Activated T-helper 1 cell treated with anti-CD3 and anti-CD28 coated beads, Interleukin-12 subunit alpha, Interleukin-12 subunit beta, Interleukin-2, Interleukin-4 antibody, amounts not matched to agents 30 ng/mL and 10 ng/mL and 1 ng/mL, durations not matched to agents 14 hours and 24 hours and 36 hours (primary cell): ENCODE measurements at regions of chr10 and their contacts with region 1.

Region 1: GRCh38 chr10:90871766-90872647 is at the start of gene RPP30:
- DNase-seq: peak; percentile 82
- H3K4me3 Mint-ChIP-seq: peak within 1 kb of the TSS; percentile 97
- H3K27ac Mint-ChIP-seq: peak within 1 kb of the TSS; percentile 91
- H3K4me1 Mint-ChIP-seq: peaks cover 39% of the 10 kb centered on the region
- H3K27me3 Mint-ChIP-seq: peaks cover 29% of the 10 kb centered on the region
- total RNA-seq, gene RPP30: 78.3 and 80.4 TPM in 2 replicates

Region 2: DNA sequence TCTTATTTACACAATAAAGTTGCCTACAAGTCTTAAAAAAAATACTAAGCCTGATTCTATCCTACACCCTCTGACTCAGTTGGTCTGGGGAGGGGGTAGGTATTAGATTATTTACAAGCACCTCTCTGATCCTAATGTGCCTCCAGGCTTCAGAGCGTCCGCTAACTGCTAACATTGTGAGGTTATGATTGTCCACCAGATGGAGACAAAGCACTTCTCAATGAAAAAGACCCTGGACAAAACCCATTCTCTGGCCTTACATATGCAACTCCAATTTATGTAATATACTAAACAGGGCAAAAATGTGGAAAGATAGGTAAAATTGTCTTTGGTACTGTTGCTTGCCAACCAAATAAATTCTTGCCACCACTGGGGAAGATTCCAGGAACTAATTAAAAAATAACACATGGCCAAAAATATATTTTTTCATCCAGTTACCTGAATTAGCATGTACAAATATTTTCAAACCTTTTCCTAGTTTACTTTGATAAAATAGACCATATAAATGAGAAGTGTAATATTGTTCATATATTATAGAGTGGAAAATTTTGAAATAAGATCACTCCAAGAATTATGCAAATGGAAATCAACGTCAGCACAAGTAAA is 1078.3 kb before region 1 on chr10:
- intact Hi-C with region 1: loop called (anchors 2 kb)
- DNase-seq: no peak
- H3K4me3 Mint-ChIP-seq: no peak overlapping the region
- H3K27ac Mint-ChIP-seq: no peak overlapping the region
- H3K4me1 Mint-ChIP-seq: peaks cover 7% of the 10 kb centered on the region
- H3K27me3 Mint-ChIP-seq: peaks cover 4% of the 10 kb centered on the region

Region 3: GRCh38 chr10:90751107-90751997 is 120.7 kb before region 1 on chr10:
- intact Hi-C with region 1: loop called (anchors 1 kb)
- DNase-seq: peak; percentile 13
- H3K4me3 Mint-ChIP-seq: no peak overlapping the region
- H3K27ac Mint-ChIP-seq: no peak overlapping the region
- H3K4me1 Mint-ChIP-seq: no peaks in the 10 kb centered on the region
- H3K27me3 Mint-ChIP-seq: peaks cover 14% of the 10 kb centered on the region

Region 4: DNA sequence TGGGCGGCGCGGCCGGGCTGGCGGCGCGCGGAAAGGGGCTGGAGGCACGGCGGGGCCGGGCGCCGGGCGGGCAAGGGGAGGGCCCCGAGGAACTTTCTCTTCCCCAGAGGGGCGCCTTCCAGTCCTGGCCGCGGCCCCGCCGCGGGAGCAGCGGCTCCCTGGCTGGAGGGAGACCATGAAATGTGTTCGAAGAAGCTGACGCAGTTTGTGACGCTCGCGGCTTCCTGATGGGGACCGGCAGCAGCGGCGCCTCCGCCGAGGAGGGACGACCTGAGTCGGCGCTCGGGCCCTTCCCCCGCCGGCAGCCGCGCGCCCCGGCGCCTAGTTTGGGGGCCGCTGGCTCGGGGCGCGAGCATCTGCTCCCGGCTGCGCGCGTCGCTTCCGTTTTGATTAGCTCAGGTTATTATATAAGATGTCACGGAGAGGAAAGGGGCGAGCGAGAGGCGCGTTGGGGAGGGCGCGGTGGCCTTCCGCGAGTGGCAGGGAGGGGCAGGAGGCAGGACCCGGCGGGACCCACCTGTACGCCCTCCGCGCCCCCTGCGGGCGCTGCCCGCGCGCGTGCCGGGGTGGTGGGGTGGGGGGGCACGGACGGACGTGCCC is 291.4 kb after region 1 on chr10:
- intact Hi-C with region 1: loop called (anchors 5 kb)
- DNase-seq: peak; percentile 66
- H3K4me3 Mint-ChIP-seq: peak overlapping the region; percentile 90
- H3K27ac Mint-ChIP-seq: peak overlapping the region; percentile 90
- H3K4me1 Mint-ChIP-seq: peaks cover 39% of the 10 kb centered on the region
- H3K27me3 Mint-ChIP-seq: peaks cover 12% of the 10 kb centered on the region

Region 5: DNA sequence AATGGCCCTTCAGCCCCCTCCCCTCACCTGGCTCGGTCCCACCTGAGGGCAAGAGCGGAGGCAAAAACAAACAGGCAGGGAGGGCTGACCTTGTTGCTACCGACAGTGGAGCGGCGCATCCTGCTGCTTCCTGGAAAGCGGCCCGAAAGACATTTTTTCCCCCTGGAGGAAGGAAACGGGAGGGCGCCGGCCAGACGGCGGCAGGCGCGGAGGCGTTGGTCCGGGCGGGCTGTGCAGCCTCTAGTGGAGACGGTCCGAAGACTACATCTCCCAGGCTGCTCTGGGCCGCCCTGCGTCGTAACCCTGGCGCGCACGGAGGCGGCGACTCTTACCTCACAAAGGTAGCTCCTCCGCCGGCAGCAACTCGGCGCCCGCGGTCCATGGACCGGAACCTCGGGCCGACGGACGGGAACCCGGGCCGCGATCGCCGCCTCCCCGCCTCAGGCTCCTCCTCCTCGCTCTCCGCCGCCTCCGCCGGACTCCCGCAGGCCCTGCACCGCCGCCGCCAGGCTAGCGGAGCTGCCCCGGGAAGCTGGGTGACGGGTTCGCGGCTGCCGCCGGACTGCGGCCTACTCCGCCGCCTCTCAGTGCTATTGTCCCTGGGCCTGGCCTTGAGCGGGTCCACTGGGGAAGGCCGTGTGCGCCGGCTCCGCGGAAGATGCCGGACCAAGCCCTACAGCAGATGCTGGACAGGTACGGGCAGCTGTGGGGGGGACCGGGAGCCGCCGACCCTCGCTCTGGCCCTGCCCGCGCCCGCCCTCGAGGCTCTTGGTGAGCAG is 1419.0 kb after region 1 on chr10 and contains the starts of genes CPEB3 and MARCHF5:
- intact Hi-C with region 1: loop called (anchors 5 kb)
- DNase-seq: peak; percentile 92
- H3K4me3 Mint-ChIP-seq: peak within 1 kb of the TSS; percentile 93
- H3K27ac Mint-ChIP-seq: peak within 1 kb of the TSS; percentile 86
- H3K4me1 Mint-ChIP-seq: peaks cover 27% of the 10 kb centered on the region
- H3K27me3 Mint-ChIP-seq: no peaks in the 10 kb centered on the region
- total RNA-seq, gene CPEB3: 2.5 and 2.7 TPM in 2 replicates
- total RNA-seq, gene MARCHF5: 22.5 and 23.9 TPM in 2 replicates